ENCODE measurements at regions of chrX and their contacts with region 1.

Region 1: GRCh38 chrX:30521440-30522182 is 56.0 kb downstream of the TASL start:
- DNase-seq: no peak
- ATAC-seq: no peak
- H3K4me3 ChIP-seq: no peak overlapping the region
- H3K27ac ChIP-seq: no peak overlapping the region
- H3K4me1 ChIP-seq: no peaks in the 10 kb centered on the region
- H3K27me3 ChIP-seq: peaks cover 0 to 11% (median 0%) of the 10 kb centered on the region in 7 donors
- CTCF ChIP-seq: no peak

Region 2: DNA sequence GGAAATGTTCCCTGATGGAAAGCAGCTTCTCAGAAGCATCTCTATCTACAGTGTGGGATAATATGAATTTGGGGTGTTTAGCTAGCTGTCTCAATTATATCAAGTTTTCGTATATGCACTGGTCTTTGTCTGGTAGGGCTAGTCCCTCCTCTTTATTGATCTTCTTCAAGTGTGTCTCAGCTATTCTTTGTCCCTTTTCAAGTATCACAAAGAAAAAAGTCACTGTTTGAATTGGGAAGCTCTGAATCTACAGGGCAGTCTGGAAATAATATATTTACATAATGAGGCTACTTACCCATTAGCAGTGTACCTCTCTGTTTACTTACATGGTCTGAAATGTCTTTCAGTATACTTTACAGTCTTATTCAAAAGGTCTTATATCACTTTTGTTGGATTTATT is 1408.4 kb before region 1 on chrX:
- intact Hi-C with region 1: loop called in 1 of 10 experiments (anchors 5 kb)
- DNase-seq: no peak
- ATAC-seq: no peak
- H3K4me3 ChIP-seq: no peak overlapping the region
- H3K27ac ChIP-seq: no peak overlapping the region
- H3K4me1 ChIP-seq: no peaks in the 10 kb centered on the region
- H3K27me3 ChIP-seq: peaks cover 0 to 12% (median 0%) of the 10 kb centered on the region in 7 donors
- CTCF ChIP-seq: no peak